RWPE1 (cell line): ENCODE measurements at regions of chr10 and their contacts with region 1.

Region 1: GRCh38 chr10:75696536-75696935 is 265.1 kb downstream of the LRMDA start:
- DNase-seq: no peak
- H3K27ac ChIP-seq: no peak overlapping the region
- CTCF ChIP-seq: no peak

Region 2: GRCh38 chr10:75685187-75685586 is 11.3 kb before region 1 on chr10:
- CTCF ChIA-PET with region 1: interaction called, 15 read pairs
- POLR2A ChIA-PET with region 1: no interaction called
- DNase-seq: no peak
- H3K27ac ChIP-seq: no peak overlapping the region
- CTCF ChIP-seq: no peak